Ovary (tissue), 10 donors: ENCODE measurements at regions of chrX and their contacts with region 1.

Region 1: GRCh38 chrX:150683536-150684146 is 9.6 kb upstream of the MTMR1 start:
- DNase-seq: no peak
- H3K4me3 ChIP-seq: no peak overlapping the region
- H3K27ac ChIP-seq: no peak overlapping the region
- H3K4me1 ChIP-seq: no peaks in the 10 kb centered on the region
- H3K27me3 ChIP-seq: no peaks in the 10 kb centered on the region
- CTCF ChIP-seq: peak in 1 of 3 donors; percentile 12
- EP300 ChIP-seq: no peak
- POLR2A ChIP-seq: no peak

Region 2: DNA sequence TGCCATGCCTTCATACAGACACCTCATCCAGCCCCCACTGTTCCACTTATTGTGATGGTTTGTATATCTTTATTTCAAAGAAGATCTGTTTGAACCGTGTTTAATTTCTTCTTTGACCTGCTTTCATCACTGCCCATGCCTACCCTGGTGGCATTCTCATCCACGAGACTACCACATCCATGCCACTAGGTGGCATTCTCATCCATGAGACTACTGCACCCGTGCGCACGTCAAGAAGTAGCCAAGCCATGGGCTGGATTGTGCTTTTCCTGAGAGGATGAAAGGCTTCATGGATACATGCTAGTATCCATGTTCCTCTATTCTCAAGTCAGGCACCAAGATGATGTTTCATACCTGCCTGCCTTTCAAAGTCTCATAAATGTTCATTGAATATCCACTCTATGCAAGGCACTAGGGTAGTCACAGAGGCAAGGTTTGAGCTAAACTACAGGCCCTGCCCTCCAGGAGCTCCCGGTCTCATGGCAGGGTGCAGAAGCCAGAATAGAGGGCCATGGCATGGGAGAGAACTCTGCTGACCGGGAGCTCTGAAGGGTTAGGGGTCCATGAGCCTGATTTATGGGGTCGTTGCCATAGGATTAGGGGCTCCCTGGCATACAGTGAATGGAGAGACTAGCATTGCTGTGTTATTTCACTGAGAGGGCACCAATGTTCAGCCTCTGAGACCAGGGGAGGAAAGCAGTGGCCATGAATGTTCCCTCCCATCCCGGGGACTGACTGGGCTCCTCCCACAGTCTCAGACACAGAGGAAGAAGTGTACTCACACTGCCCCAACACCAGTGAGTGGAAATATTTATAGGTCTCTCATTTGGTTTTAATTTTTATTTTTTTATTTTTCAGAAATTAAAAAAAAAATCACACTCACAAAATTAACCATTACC is 720.5 kb before region 1 on chrX:
- intact Hi-C with region 1: loop called in 1 of 4 experiments (anchors 10 kb)
- DNase-seq: peak; percentile 35 to 60 (median 53)
- H3K4me3 ChIP-seq: no peak overlapping the region
- H3K27ac ChIP-seq: no peak overlapping the region
- H3K4me1 ChIP-seq: no peaks in the 10 kb centered on the region
- H3K27me3 ChIP-seq: peaks cover 3% of the 10 kb centered on the region
- CTCF ChIP-seq: peak in 2 of 3 donors; percentile 49 to 59
- EP300 ChIP-seq: no peak
- POLR2A ChIP-seq: no peak